Mammary epithelial cell (primary cell): ENCODE measurements at regions of chr2 and their contacts with region 1.

Region 1: DNA sequence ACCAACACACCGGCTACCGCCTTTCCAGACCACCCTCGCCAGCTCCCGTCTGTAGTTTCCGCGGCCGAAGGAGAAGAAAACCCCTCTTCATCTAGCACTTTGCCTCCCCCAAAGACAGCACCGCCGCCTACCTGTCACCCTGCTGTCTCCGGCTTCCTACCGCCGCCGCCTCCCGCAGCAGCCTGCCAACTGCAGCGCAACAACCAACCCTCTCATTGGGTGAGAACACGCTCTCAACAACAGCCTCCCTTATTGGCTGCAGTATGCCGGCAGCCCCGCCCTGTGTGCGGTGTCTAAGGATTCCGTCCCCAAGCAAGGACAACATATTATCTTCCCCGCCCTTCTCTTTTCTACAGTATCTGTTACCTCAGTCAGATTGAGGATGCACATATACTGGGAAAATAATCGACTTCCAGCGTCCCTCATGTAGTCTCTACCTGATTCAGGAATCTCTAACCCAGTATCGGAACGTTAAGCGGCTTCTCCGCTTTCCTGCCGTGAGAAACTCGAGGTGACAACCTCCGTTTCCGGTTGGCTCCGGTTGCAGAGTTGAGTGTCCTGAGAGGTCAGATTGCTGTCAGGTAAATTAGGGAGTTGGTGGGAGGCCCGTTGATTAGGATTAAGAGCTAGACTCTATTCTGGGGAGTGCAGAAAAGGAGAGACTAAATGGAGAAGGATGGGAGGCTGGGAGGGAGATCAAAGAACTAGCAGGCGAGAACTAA is at the starts of genes HYCC2 and NDUFB3:
- DNase-seq: peak; percentile 93
- H3K4me3 ChIP-seq: peak within 1 kb of the TSS; percentile 84 to 90 (median 87)
- H3K27ac ChIP-seq: peak within 1 kb of the TSS; percentile 93
- H3K4me1 ChIP-seq: peaks cover 12% of the 10 kb centered on the region
- H3K27me3 ChIP-seq: no peaks in the 10 kb centered on the region
- CTCF ChIP-seq: peak in 1 of 2 donors; percentile 49
- total RNA-seq, gene HYCC2: 15.0 to 15.2 TPM
- total RNA-seq, gene NDUFB3: 23.7 to 84.9 TPM

Region 2: GRCh38 chr2:200812122-200813022 is 259.3 kb before region 1 on chr2:
- CTCF ChIA-PET with region 1: no interaction called
- dilution Hi-C with region 1: no loop called
- in situ Hi-C with region 1: no loop called
- intact Hi-C with region 1: no loop called
- DNase-seq: peak; percentile 76
- H3K4me3 ChIP-seq: peak overlapping the region; percentile 46 to 96 (median 86)
- H3K27ac ChIP-seq: peak overlapping the region; percentile 94
- H3K4me1 ChIP-seq: peaks cover 25% of the 10 kb centered on the region
- H3K27me3 ChIP-seq: no peaks in the 10 kb centered on the region
- CTCF ChIP-seq: peak; percentile 43 to 70

Region 3: DNA sequence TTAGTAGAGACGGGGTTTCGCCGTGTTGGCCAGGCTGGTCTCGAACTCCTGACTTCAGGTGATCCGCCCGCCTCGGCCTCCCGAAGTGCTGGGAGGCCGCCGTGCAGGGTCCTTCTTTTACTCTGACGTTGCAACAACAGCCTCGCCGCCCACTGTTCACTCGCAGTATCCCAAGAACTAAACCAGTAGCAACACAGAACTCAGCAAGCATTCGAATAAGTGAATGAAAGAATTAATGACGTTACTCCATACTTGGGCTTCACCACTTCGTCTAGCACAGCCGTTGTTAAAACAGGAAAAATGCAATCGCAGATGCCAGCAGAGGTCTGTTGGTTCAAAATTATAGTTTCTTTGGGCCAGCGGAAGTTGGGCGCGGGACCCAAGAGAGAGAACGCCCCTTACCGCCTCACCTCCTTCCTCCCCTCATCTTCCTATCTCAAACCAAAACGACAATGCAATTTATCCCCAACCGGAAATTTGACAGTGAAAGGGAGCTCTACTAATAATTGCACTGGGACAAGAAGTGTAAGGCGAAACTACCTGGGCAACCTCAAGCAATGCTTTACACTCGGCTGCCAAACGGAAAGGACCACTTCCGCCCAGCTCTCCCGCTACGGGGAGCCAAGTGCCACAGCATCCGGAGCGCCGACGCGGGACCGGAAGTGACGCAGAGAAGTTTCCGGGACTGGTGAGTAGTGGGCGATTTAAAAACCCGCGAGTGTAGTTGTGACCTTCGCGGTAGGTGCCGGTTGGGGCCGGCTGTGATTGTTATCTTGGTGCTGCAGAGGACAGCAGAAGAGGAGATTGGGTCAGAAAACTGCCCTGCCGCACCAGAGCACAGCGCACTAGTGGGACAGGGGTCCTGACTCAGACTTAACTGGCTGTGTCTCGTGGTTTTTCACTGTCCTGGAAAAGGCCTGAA is 182.7 kb before region 1 on chr2 and contains the starts of genes NIF3L1 and PPIL3:
- CTCF ChIA-PET with region 1: no interaction called
- dilution Hi-C with region 1: no loop called
- in situ Hi-C with region 1: no loop called
- intact Hi-C with region 1: loop called (anchors 1 kb)
- DNase-seq: peak; percentile 98
- H3K4me3 ChIP-seq: peak within 1 kb of the TSS; percentile 77 to 97 (median 85)
- H3K27ac ChIP-seq: peak within 1 kb of the TSS; percentile 92
- H3K4me1 ChIP-seq: peaks cover 5% of the 10 kb centered on the region
- H3K27me3 ChIP-seq: no peaks in the 10 kb centered on the region
- CTCF ChIP-seq: no peak
- total RNA-seq, gene NIF3L1: 18.0 to 23.2 TPM
- total RNA-seq, gene PPIL3: 18.5 to 45.1 TPM

Region 4: GRCh38 chr2:200963124-200963917 is 108.3 kb before region 1 on chr2 and contains the start of gene ORC2:
- CTCF ChIA-PET with region 1: interaction called, 11 read pairs
- dilution Hi-C with region 1: no loop called
- in situ Hi-C with region 1: no loop called
- intact Hi-C with region 1: loop called (anchors 1 kb)
- DNase-seq: peak; percentile 95
- H3K4me3 ChIP-seq: peak within 1 kb of the TSS; percentile 65 to 100 (median 85)
- H3K27ac ChIP-seq: peak within 1 kb of the TSS; percentile 80
- H3K4me1 ChIP-seq: peaks cover 30% of the 10 kb centered on the region
- H3K27me3 ChIP-seq: no peaks in the 10 kb centered on the region
- CTCF ChIP-seq: peak; percentile 45 to 63
- total RNA-seq, gene ORC2: 14.8 to 44.5 TPM

Region 5: GRCh38 chr2:201158111-201158929 is 86.7 kb after region 1 on chr2:
- CTCF ChIA-PET with region 1: no interaction called
- dilution Hi-C with region 1: loop called (anchors 5 kb)
- in situ Hi-C with region 1: loop called in 1 of 2 experiments (anchors 10 kb)
- intact Hi-C with region 1: loop called (anchors 1 kb)
- DNase-seq: peak; percentile 76
- H3K4me3 ChIP-seq: no peak overlapping the region
- H3K27ac ChIP-seq: peak overlapping the region; percentile 81
- H3K4me1 ChIP-seq: peaks cover 14% of the 10 kb centered on the region
- H3K27me3 ChIP-seq: no peaks in the 10 kb centered on the region
- CTCF ChIP-seq: peak; percentile 70 to 79

Region 6: GRCh38 chr2:201171259-201171814 is 99.7 kb after region 1 on chr2:
- CTCF ChIA-PET with region 1: interaction called, 10 read pairs
- dilution Hi-C with region 1: no loop called
- in situ Hi-C with region 1: no loop called
- intact Hi-C with region 1: no loop called
- DNase-seq: no peak
- H3K4me3 ChIP-seq: no peak overlapping the region
- H3K27ac ChIP-seq: no peak overlapping the region
- H3K4me1 ChIP-seq: no peaks in the 10 kb centered on the region
- H3K27me3 ChIP-seq: no peaks in the 10 kb centered on the region
- CTCF ChIP-seq: no peak

Region 7: DNA sequence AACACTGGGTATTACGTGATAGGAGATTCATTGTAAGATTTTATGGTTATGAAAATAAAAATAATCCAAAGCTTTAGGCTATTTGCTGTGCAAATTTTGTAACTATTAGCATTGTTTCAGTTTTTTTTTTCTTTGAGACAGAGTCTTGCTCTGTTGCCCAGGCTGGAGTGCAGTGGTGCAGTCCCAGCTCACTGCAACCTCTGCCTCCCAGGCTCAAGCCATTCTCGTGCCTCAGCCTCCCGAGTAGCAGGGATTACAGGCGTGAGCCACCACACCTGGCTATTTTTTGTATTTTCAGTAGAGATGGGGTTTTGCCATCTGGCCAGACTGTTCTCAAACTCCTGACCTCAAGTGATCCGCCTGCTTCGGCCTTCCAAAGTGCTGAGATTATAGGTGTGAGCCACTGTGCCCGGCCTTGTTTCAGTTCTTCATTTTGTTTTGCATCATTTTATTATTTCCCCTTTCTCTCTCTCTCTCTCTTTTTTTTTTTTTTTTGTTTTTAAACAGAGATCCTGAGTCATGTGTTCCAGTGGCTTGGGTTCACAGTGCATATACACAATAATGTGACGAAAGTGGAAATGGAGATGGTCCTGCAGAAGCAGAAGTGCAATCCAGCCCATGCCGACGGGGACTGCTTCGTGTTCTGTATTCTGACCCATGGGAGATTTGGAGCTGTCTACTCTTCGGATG is 137.1 kb after region 1 on chr2:
- CTCF ChIA-PET with region 1: no interaction called
- dilution Hi-C with region 1: no loop called
- in situ Hi-C with region 1: no loop called
- intact Hi-C with region 1: no loop called
- DNase-seq: no peak
- H3K4me3 ChIP-seq: no peak overlapping the region
- H3K27ac ChIP-seq: no peak overlapping the region
- H3K4me1 ChIP-seq: no peaks in the 10 kb centered on the region
- H3K27me3 ChIP-seq: no peaks in the 10 kb centered on the region
- CTCF ChIP-seq: no peak

Region 8: DNA sequence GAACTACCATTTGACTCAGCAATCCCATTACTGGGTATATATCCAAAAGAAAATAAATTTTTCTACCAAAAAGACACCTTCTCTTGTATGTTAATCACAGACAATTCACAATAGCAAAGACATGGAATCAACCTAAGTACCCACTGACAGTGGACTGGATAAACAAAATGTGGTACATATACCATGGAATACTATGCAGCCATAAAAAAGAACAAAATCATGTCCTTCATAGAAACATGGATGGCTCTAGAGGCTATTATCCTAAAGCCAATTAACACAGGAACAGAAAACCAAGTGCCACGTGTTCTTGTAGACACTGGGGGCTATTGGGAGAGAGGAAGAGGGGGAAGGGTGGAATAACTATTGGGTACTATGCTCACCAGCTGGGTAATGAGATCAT is 257.8 kb after region 1 on chr2:
- CTCF ChIA-PET with region 1: no interaction called
- dilution Hi-C with region 1: no loop called
- in situ Hi-C with region 1: no loop called
- intact Hi-C with region 1: no loop called
- DNase-seq: no peak
- H3K4me3 ChIP-seq: no peak overlapping the region
- H3K27ac ChIP-seq: no peak overlapping the region
- H3K4me1 ChIP-seq: no peaks in the 10 kb centered on the region
- H3K27me3 ChIP-seq: no peaks in the 10 kb centered on the region
- CTCF ChIP-seq: no peak